Common myeloid progenitor, CD34-positive (primary cell): ENCODE measurements at regions of chr9 and their contacts with region 1.

Region 1: DNA sequence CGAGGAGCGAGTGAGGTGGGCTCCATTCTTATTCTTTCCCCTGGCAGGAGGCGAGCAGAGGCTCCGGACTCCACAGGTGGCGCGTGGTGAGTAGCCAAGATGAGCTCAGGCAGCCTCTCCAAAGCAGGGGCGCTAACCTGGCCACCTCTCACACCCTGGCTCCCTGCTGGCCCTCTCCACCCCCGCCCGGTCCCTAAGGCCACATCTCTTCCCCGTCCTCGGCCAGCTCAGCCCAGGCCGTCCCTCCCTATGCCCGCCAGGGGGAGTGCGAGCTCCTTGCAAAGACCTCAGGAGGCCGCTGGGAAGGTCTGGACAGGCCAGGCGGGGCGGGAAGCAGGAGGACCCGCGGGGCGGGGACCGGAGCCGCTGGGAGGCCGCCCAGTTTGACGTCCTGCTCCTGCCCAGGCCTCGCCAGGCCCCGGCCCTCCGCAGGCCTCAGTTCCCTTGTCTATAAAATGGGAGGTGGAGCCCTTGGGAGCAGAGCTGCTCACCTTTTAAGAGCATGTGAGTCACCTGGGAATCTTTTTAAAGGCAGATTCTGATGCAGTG is 46.3 kb upstream of the GGTA1 start:
- DNase-seq: peak; percentile 81 to 87 (median 85)
- H3K4me3 ChIP-seq: peak overlapping the region in 3 of 7 experiments; percentile 6 to 20 (median 11)
- H3K27ac ChIP-seq: no peak overlapping the region
- H3K4me1 ChIP-seq: peaks cover 0 to 16% (median 14%) of the 10 kb centered on the region in 4 experiments
- H3K27me3 ChIP-seq: peaks cover 0 to 5% (median 0%) of the 10 kb centered on the region in 5 experiments

Region 2: DNA sequence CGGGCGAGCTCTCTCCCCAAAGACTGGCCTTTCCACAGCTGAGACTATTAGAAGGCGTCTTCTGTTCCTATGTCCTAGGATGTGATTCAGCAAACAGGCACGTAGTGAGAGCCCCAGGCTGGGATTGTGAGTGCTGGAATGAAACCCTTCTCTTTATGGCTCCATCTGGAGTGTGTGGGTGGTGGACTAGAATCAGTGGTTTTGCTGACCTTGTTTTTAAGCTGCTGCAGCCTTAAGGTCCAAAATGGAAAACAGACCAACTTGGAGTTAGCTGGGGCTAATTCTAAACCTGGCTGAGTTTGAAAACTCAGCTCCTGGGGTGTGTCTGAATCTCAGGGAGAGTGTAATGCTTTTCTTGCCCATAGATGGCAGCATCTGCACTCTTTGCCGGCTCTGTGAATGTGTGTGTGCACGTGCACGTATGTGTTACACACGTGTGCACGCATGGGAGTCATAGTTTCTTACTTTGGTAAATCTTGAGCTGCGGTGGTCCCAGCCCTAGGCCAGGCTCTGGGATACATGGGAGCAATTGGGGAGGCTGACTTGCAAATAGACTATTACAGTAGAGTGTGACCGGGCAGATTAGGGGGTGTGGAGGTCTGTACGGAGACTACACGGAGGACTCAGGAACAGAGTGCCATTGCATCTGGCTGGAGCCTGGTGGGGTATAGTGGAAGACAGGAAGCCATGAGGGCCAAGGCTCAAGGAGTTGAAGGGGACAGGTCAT is 267.3 kb before region 1 on chr9:
- CTCF ChIA-PET with region 1: no interaction called
- POLR2A ChIA-PET with region 1: no interaction called
- DNase-seq: peak; percentile 59 to 87 (median 83)
- H3K4me3 ChIP-seq: peak overlapping the region in 1 of 7 experiments; percentile 29
- H3K27ac ChIP-seq: no peak overlapping the region
- H3K4me1 ChIP-seq: peaks cover 14 to 92% (median 68%) of the 10 kb centered on the region in 4 experiments
- H3K27me3 ChIP-seq: no peaks in the 10 kb centered on the region

Region 3: GRCh38 chr9:121445981-121446380 is 100.0 kb before region 1 on chr9:
- CTCF ChIA-PET with region 1: interaction called, 68 read pairs
- POLR2A ChIA-PET with region 1: interaction called, 4 read pairs
- DNase-seq: peak; percentile 66 to 73 (median 71)
- H3K4me3 ChIP-seq: no peak overlapping the region
- H3K27ac ChIP-seq: no peak overlapping the region
- H3K4me1 ChIP-seq: peaks cover 6 to 17% (median 15%) of the 10 kb centered on the region in 4 experiments
- H3K27me3 ChIP-seq: peaks cover 0 to 19% (median 6%) of the 10 kb centered on the region in 5 experiments

Region 4: DNA sequence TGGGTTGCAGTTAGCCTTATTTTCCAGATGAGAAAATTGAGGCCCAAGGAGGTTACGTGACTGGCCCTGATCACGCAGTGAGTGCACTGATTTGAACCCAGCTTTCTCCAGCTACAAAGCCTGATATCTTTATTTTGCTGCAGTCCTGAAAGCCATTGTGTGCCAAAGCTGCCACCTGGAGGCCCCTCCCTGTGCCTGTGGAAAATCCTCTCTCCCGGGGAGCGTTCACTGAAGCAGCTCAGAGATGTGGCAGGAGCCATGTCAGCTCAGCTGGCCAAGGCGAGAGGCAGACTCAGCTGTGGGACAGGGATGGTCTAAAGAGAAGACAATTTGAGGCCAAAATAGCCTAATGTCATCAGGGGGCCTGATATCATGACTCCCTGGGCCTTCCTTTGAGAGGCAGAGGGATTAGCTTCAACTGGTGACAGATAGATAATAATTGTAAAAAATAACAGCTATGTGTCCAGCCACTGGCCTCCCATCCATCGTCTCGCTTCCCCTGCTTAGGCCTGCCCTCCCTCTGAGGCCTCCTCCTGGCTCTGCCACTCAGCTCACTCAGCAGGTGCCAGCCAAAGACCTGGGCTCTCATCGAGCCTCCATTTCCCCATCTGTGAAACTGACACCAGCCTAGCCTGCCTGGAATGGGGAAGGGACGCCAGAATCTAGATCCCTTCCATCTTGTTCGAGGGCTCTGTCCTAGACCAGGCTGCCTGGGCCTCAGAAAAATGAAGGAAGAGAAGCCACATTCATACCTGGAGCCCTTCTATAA is 28.0 kb after region 1 on chr9:
- CTCF ChIA-PET with region 1: interaction called, 15 read pairs
- POLR2A ChIA-PET with region 1: no interaction called
- DNase-seq: no peak
- H3K4me3 ChIP-seq: no peak overlapping the region
- H3K27ac ChIP-seq: no peak overlapping the region
- H3K4me1 ChIP-seq: peaks cover 0 to 3% (median 1%) of the 10 kb centered on the region in 4 experiments
- H3K27me3 ChIP-seq: no peaks in the 10 kb centered on the region

Region 5: GRCh38 chr9:121692606-121693387 is 146.8 kb after region 1 on chr9:
- CTCF ChIA-PET with region 1: interaction called, 12 read pairs
- POLR2A ChIA-PET with region 1: interaction called, 3 read pairs
- DNase-seq: peak in 1 of 3 donors; percentile 17
- H3K4me3 ChIP-seq: no peak overlapping the region
- H3K27ac ChIP-seq: no peak overlapping the region
- H3K4me1 ChIP-seq: peaks cover 5 to 13% (median 9%) of the 10 kb centered on the region in 4 experiments
- H3K27me3 ChIP-seq: peaks cover 0 to 18% (median 6%) of the 10 kb centered on the region in 5 experiments

Region 6: GRCh38 chr9:121997791-121998190 is 451.8 kb after region 1 on chr9:
- CTCF ChIA-PET with region 1: interaction called, 10 read pairs
- POLR2A ChIA-PET with region 1: no interaction called
- DNase-seq: no peak
- H3K4me3 ChIP-seq: no peak overlapping the region
- H3K27ac ChIP-seq: no peak overlapping the region
- H3K4me1 ChIP-seq: peaks cover 0 to 3% (median 0%) of the 10 kb centered on the region in 4 experiments
- H3K27me3 ChIP-seq: no peaks in the 10 kb centered on the region